MCF 10A (cell line): ENCODE measurements at regions of chr7 and their contacts with region 1.

Region 1: GRCh38 chr7:9856668-9857067 is 1117.0 kb upstream of the PHF14 start:
- DNase-seq: no peak
- H3K4me3 Mint-ChIP-seq: no peak overlapping the region
- H3K27ac Mint-ChIP-seq: no peak overlapping the region
- H3K4me1 Mint-ChIP-seq: no peaks in the 10 kb centered on the region
- H3K27me3 Mint-ChIP-seq: peaks cover 47% of the 10 kb centered on the region
- CTCF ChIP-seq: no peak

Region 2: GRCh38 chr7:9890092-9890491 is 33.4 kb after region 1 on chr7:
- CTCF ChIA-PET with region 1: no interaction called
- POLR2A ChIA-PET with region 1: no interaction called
- intact Hi-C with region 1: loop called (anchors 2 kb)
- DNase-seq: no peak
- H3K4me3 Mint-ChIP-seq: no peak overlapping the region
- H3K27ac Mint-ChIP-seq: no peak overlapping the region
- H3K4me1 Mint-ChIP-seq: no peaks in the 10 kb centered on the region
- H3K27me3 Mint-ChIP-seq: peaks cover 14% of the 10 kb centered on the region
- CTCF ChIP-seq: no peak

Region 3: GRCh38 chr7:9900339-9900738 is 43.7 kb after region 1 on chr7:
- CTCF ChIA-PET with region 1: no interaction called
- POLR2A ChIA-PET with region 1: no interaction called
- intact Hi-C with region 1: no loop called
- DNase-seq: no peak
- H3K4me3 Mint-ChIP-seq: no peak overlapping the region
- H3K27ac Mint-ChIP-seq: no peak overlapping the region
- H3K4me1 Mint-ChIP-seq: no peaks in the 10 kb centered on the region
- H3K27me3 Mint-ChIP-seq: peaks cover 12% of the 10 kb centered on the region
- CTCF ChIP-seq: no peak